CD8-positive, alpha-beta T cell (primary cell): ENCODE measurements at regions of chr14 and their contacts with region 1.

Region 1: GRCh38 chr14:99205086-99205688 is 66.8 kb downstream of the BCL11B start:
- DNase-seq: no peak
- ATAC-seq: no peak
- H3K4me3 ChIP-seq: no peak overlapping the region
- H3K4me3 Mint-ChIP-seq: peak overlapping the region; percentile 70
- H3K27ac ChIP-seq: peak overlapping the region; percentile 21 to 62
- H3K27ac Mint-ChIP-seq: peak overlapping the region; percentile 99
- H3K4me1 ChIP-seq: peaks cover 100% of the 10 kb centered on the region
- H3K4me1 Mint-ChIP-seq: peaks cover 100% of the 10 kb centered on the region
- H3K27me3 ChIP-seq: no peaks in the 10 kb centered on the region
- H3K27me3 Mint-ChIP-seq: no peaks in the 10 kb centered on the region
- CTCF ChIP-seq: no peak

Region 2: GRCh38 chr14:99224116-99224910 is 19.1 kb after region 1 on chr14:
- CTCF ChIA-PET with region 1: interaction called, 6 read pairs
- POLR2A ChIA-PET with region 1: interaction called, 2,179 read pairs
- intact Hi-C with region 1: loop called in 1 of 2 experiments (anchors 2 kb)
- DNase-seq: peak in 1 of 9 experiments; percentile 60
- ATAC-seq: peak; percentile 9
- H3K4me3 ChIP-seq: peak overlapping the region in 1 of 2 experiments; percentile 3
- H3K4me3 Mint-ChIP-seq: peak overlapping the region; percentile 54
- H3K27ac ChIP-seq: peak overlapping the region; percentile 6 to 96
- H3K27ac Mint-ChIP-seq: peak overlapping the region; percentile 99
- H3K4me1 ChIP-seq: peaks cover 95% of the 10 kb centered on the region
- H3K4me1 Mint-ChIP-seq: peaks cover 92% of the 10 kb centered on the region
- H3K27me3 ChIP-seq: no peaks in the 10 kb centered on the region
- H3K27me3 Mint-ChIP-seq: no peaks in the 10 kb centered on the region
- CTCF ChIP-seq: no peak

Region 3: GRCh38 chr14:99654235-99654966 is 449.2 kb after region 1 on chr14:
- CTCF ChIA-PET with region 1: no interaction called
- POLR2A ChIA-PET with region 1: no interaction called
- intact Hi-C with region 1: no loop called
- DNase-seq: no peak
- ATAC-seq: no peak
- H3K4me3 ChIP-seq: no peak overlapping the region
- H3K4me3 Mint-ChIP-seq: no peak overlapping the region
- H3K27ac ChIP-seq: no peak overlapping the region
- H3K27ac Mint-ChIP-seq: no peak overlapping the region
- H3K4me1 ChIP-seq: no peaks in the 10 kb centered on the region
- H3K4me1 Mint-ChIP-seq: peaks cover 2% of the 10 kb centered on the region
- H3K27me3 ChIP-seq: peaks cover 2 to 3% of the 10 kb centered on the region in 2 experiments
- H3K27me3 Mint-ChIP-seq: peaks cover 53% of the 10 kb centered on the region
- CTCF ChIP-seq: no peak